Breast epithelium (tissue), 4 donors: ENCODE measurements at regions of chrX and their contacts with region 1.

Region 1: DNA sequence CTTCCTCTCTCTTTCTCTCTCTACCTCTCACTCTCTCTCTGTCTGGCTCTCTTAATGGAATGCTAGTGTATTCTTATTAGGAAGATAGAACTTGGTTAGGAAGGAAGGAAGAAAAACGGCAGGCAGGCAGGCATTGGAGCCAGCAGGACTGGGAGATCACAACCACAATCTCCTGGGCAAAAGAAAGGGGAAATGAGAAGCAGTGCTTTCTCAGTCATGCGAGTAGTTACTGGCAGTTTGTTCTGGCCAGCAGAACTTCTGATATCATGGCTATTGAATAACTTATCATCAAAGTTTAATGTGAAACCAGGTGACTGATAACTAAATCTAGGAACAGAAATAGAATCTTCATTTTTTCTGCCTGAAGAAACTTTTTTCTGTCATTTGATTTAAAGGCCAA is 60.9 kb upstream of the PAGE1 start:
- DNase-seq: no peak
- H3K4me3 ChIP-seq: no peak overlapping the region
- H3K27ac ChIP-seq: no peak overlapping the region
- H3K4me1 ChIP-seq: no peaks in the 10 kb centered on the region
- H3K27me3 ChIP-seq: peaks cover 0 to 71% of the 10 kb centered on the region in 2 donors
- CTCF ChIP-seq: no peak
- POLR2A ChIP-seq: no peak

Region 2: GRCh38 chrX:50889582-50889981 is 1132.9 kb after region 1 on chrX:
- intact Hi-C with region 1: loop called (anchors 5 kb)
- DNase-seq: no peak
- H3K4me3 ChIP-seq: no peak overlapping the region
- H3K27ac ChIP-seq: no peak overlapping the region
- H3K4me1 ChIP-seq: no peaks in the 10 kb centered on the region
- H3K27me3 ChIP-seq: peaks cover 0 to 23% of the 10 kb centered on the region in 2 donors
- CTCF ChIP-seq: no peak
- POLR2A ChIP-seq: no peak